Activated T-helper 1 cell treated with anti-CD3 and anti-CD28 coated beads, Interleukin-12 subunit alpha, Interleukin-12 subunit beta, Interleukin-2, Interleukin-4 antibody, amounts not matched to agents 30 ng/mL and 10 ng/mL and 1 ng/mL, durations not matched to agents 14 hours and 24 hours and 36 hours (primary cell): ENCODE measurements at regions of chr12 and their contacts with region 1.

Region 1: GRCh38 chr12:42325653-42326474 is at the starts of genes PPHLN1 and ZCRB1:
- DNase-seq: peak; percentile 79
- H3K4me3 Mint-ChIP-seq: peak within 1 kb of the TSS; percentile 98
- H3K27ac Mint-ChIP-seq: peak within 1 kb of the TSS; percentile 97
- H3K4me1 Mint-ChIP-seq: peaks cover 46% of the 10 kb centered on the region
- H3K27me3 Mint-ChIP-seq: no peaks in the 10 kb centered on the region
- total RNA-seq, gene PPHLN1: 89.2 and 90.1 TPM in 2 replicates
- total RNA-seq, gene ZCRB1: 47.4 and 58.2 TPM in 2 replicates

Region 2: GRCh38 chr12:41361738-41362137 is 964.1 kb before region 1 on chr12:
- intact Hi-C with region 1: no loop called
- DNase-seq: no peak
- H3K4me3 Mint-ChIP-seq: no peak overlapping the region
- H3K27ac Mint-ChIP-seq: no peak overlapping the region
- H3K4me1 Mint-ChIP-seq: no peaks in the 10 kb centered on the region
- H3K27me3 Mint-ChIP-seq: no peaks in the 10 kb centered on the region

Region 3: GRCh38 chr12:42237052-42237852 is 88.6 kb before region 1 on chr12:
- intact Hi-C with region 1: loop called (anchors 1 kb)
- DNase-seq: peak; percentile 68
- H3K4me3 Mint-ChIP-seq: peak overlapping the region; percentile 87
- H3K27ac Mint-ChIP-seq: peak overlapping the region; percentile 83
- H3K4me1 Mint-ChIP-seq: peaks cover 46% of the 10 kb centered on the region
- H3K27me3 Mint-ChIP-seq: no peaks in the 10 kb centered on the region

Region 4: DNA sequence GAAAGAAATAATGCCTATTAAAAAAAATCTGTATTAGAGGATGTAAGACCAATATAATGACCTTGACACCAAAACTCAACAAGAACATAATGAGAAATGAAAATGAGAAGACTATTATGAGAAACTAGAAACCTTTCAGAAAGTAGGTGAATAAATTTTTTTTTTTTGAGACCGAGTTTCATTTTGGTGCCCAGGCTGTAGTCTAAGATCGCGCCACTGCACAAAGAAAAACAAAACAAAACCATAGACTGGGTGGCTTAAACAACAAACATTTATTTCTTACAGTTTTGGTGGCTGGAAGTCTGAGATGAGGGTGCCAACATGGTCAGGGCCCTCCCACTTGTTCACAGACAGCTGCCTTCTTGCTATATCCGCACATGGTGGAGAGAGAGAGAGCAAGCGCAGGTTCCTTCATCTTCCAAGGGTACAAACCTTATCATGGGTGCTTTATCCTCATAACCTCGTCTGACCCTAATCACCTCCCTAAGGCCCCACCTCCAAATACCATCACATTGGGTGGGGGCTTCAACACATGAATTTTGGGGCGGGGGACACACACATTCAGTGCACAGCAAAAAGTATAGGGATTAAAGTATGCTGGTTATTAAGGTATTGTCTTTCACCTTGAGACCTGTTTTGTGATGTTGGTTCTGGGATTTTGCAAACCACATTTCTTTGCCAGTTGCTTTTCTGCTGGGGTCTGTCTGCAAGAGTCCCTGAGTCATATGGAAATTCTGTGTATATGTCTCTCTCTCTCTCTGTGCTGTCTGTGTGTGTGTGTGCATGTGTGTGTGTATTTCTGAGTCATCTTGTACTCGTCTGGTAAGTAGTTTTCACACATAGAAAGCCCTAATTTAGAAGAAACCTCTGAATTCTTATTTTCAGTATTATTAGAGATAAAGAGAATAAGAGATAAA is 26.2 kb before region 1 on chr12:
- intact Hi-C with region 1: loop called (anchors 1 kb)
- DNase-seq: peak; percentile 31
- H3K4me3 Mint-ChIP-seq: no peak overlapping the region
- H3K27ac Mint-ChIP-seq: peak overlapping the region; percentile 54
- H3K4me1 Mint-ChIP-seq: peaks cover 13% of the 10 kb centered on the region
- H3K27me3 Mint-ChIP-seq: no peaks in the 10 kb centered on the region

Region 5: DNA sequence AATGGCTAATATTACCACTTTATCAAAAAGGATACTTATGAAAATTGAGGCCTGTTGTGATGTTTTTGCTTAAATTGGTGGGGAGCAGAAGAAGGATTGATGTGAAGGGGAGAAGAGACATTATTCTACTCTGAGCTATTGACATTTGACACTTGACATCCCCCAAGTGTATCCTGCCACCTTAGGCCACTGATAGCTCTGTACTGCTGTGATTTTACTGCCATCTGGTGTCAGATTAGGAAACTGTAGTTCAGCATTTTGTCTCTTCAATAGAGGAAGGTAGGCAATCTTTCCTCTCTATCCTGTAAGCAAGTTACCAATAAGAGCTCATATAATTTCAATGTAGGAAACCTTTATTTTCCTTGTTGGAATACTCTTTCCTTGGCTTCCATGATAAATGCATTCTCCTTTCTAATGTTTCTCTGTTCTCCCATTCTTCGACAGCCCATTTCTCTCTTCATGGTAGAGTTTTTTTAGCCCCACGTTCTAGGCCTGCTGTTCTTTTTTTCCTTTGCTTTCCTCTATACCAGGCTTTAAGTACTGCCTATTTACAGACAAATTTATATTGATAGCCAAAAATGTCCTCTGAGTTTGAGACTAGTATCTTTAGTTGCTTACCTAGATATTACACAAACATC is 46.4 kb after region 1 on chr12:
- intact Hi-C with region 1: loop called (anchors 5 kb)
- DNase-seq: peak; percentile 12
- H3K4me3 Mint-ChIP-seq: no peak overlapping the region
- H3K27ac Mint-ChIP-seq: no peak overlapping the region
- H3K4me1 Mint-ChIP-seq: no peaks in the 10 kb centered on the region
- H3K27me3 Mint-ChIP-seq: no peaks in the 10 kb centered on the region

Region 6: GRCh38 chr12:43758728-43759563 is 1433.1 kb after region 1 on chr12 and contains the starts of genes IRAK4 and PUS7L:
- intact Hi-C with region 1: loop called (anchors 5 kb)
- DNase-seq: peak; percentile 91
- H3K4me3 Mint-ChIP-seq: peak within 1 kb of the TSS; percentile 98
- H3K27ac Mint-ChIP-seq: peak within 1 kb of the TSS; percentile 98
- H3K4me1 Mint-ChIP-seq: peaks cover 68% of the 10 kb centered on the region
- H3K27me3 Mint-ChIP-seq: no peaks in the 10 kb centered on the region
- total RNA-seq, gene IRAK4: 21.4 and 22.5 TPM in 2 replicates
- total RNA-seq, gene PUS7L: 23.1 and 25.4 TPM in 2 replicates

Region 7: GRCh38 chr12:43805860-43806736 is 1480.2 kb after region 1 on chr12 and contains the start of gene TWF1:
- intact Hi-C with region 1: loop called (anchors 5 kb)
- DNase-seq: peak; percentile 87
- H3K4me3 Mint-ChIP-seq: peak within 1 kb of the TSS; percentile 96
- H3K27ac Mint-ChIP-seq: peak within 1 kb of the TSS; percentile 100
- H3K4me1 Mint-ChIP-seq: peaks cover 33% of the 10 kb centered on the region
- H3K27me3 Mint-ChIP-seq: peaks cover 2% of the 10 kb centered on the region
- total RNA-seq, gene TWF1: 28.4 and 29.2 TPM in 2 replicates